Motor neuron (in vitro differentiated cells): ENCODE measurements at regions of chr18 and their contacts with region 1.

Region 1: GRCh38 chr18:7789856-7790552 is 222.9 kb downstream of the PTPRM start:
- ATAC-seq: peak; percentile 60 to 94 (median 74)
- H3K4me3 ChIP-seq: no peak overlapping the region
- H3K27ac ChIP-seq: no peak overlapping the region
- H3K4me1 ChIP-seq: peaks cover 0 to 37% of the 10 kb centered on the region in 2 donors

Region 2: DNA sequence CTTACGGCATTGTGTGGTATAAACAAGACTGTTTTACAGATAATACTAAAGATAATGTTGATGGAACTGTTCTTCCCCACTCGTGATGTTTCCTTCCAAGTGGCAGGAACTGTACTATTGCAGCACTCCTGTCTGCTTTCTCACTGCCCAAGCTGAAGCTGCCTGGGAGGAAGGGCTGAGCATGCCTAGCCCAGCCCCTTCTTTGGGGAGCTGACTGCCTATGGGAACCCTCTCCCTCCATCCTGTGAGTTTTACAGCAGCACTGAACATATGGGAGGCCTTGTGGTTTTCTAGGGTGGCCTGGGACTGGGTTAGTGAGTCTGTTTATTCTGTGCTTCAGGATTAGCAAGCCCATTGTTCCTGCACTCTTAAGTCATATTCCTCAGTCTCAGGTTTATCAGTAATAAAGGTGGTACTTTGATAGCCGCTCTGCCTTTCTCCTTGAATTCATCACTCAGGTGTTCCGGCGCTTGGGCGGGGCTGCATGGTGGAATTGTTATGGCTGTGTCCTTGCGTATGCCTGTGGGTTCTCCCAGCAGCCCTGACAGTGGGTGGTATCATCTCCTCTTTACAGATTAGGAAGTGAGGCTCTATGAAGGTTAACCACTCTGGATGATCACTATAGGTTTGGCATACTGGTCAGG is 156.9 kb after region 1 on chr18:
- in situ Hi-C with region 1: loop called in 1 of 9 experiments (anchors 25 kb)
- ATAC-seq: peak; percentile 69 to 86 (median 83)
- H3K4me3 ChIP-seq: peak overlapping the region; percentile 31 to 42 (median 34)
- H3K27ac ChIP-seq: no peak overlapping the region
- H3K4me1 ChIP-seq: peaks cover 7 to 18% of the 10 kb centered on the region in 2 donors